Cardiac septum (tissue), 1 donor: ENCODE measurements at regions of chr11 and their contacts with region 1.

Region 1: DNA sequence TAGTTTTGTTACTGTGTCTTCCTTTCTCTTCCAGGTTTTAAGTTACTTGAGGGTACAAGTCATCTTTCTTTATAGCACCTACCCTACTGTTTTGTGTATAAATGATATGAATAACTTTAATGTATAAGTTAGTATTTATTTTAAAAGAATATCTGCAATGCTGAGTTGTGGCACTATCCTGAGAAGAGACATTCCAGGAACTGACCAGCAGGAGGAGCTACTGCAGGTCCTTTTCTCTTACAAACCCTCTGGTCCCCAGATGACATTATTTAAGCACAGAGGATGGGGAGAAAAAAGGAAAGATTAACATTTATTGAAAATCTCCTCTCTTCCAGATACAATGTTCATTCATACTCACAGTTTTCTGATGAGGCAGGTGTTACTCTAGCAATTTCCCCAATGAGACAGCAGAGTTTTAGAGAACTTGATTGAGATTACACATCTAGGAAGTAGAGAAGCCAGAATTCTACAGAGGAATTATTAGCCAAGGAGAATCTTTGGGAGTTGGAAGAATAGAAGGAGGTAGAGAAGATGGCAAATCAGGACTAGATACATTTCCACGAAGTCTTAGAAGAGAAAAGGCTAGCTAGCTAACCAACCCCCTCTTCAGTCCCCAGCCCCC is 541.2 kb upstream of the API5 start:
- DNase-seq: no peak

Region 2: DNA sequence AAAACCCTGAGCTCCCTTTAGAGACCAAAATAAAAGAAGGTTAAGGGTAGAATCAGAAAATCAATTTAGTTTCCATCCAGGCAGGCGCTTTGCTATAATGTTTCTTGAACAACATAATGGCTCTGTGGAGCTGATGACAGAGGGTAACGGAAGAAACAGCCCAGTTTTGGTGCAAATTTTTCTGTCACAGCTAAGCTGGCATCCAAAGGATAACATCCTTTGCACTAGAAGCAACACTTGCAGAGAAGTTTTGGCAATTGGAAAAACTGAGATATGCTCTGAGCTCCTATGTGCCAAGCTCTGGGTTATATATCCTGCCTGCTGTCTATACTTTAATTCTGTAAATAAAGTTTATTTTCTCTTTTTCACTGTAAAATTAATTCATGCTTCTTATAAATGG is 45.9 kb after region 1 on chr11:
- intact Hi-C with region 1: no loop called
- DNase-seq: no peak

Region 3: DNA sequence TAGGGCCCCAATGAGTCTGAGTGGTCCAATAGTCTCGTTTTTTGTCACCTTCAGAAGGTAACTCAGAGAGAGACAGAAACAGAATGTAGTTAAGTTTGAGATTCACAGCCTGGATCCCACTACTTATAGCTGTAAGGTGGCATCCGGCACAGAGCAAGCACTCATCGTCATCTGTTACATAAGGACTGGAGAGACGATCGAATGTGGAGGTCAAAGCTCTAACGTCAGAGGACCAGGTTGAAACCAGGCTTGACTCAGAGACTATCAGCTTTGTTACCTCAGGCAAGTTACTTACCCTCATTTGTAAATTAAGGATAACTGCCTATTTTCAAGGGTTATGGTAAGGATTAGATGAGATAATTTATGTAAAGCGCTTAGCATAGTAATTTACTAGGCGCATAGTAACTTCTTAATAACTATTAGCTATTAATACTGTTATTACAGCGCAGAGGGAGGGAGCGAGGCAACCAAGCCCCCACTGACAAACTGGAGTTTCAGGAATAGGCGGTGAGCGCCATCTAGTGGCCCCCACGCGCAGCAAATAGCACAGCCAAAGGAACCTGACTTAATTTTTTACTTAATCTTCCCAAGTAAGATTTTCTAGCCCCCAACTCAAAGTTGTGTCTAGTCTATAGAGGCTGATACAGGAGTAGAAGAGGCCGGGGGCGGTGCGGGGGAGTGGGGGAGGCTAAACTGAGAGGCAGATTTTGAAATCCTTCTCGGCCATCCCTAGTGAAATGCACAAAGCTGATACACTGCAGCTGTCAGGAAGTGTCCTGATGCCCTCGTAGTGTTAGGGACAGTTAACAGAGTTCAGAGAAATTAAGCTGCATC is 512.3 kb after region 1 on chr11:
- intact Hi-C with region 1: loop called (anchors 2 kb)
- DNase-seq: no peak